ENCODE measurements at regions of chr3 and their contacts with region 1.

Region 1: GRCh38 chr3:50491023-50491422 is 12.4 kb downstream of the CACNA2D2 start:
- DNase-seq: no peak
- H3K4me3 ChIP-seq: no peak overlapping the region
- H3K27ac ChIP-seq: no peak overlapping the region
- H3K4me1 ChIP-seq: no peaks in the 10 kb centered on the region
- H3K27me3 ChIP-seq: no peaks in the 10 kb centered on the region
- CTCF ChIP-seq: no peak
- POLR2A ChIP-seq: no peak

Region 2: GRCh38 chr3:49882166-49882565 is 608.9 kb before region 1 on chr3:
- intact Hi-C with region 1: loop called (anchors 5 kb)
- DNase-seq: no peak
- H3K4me3 ChIP-seq: no peak overlapping the region
- H3K27ac ChIP-seq: no peak overlapping the region
- H3K4me1 ChIP-seq: no peaks in the 10 kb centered on the region
- H3K27me3 ChIP-seq: no peaks in the 10 kb centered on the region
- CTCF ChIP-seq: no peak
- POLR2A ChIP-seq: no peak

Region 3: GRCh38 chr3:50519471-50520089 is 28.6 kb after region 1 on chr3:
- intact Hi-C with region 1: no loop called
- DNase-seq: peak; percentile 46 to 74
- H3K4me3 ChIP-seq: no peak overlapping the region
- H3K27ac ChIP-seq: no peak overlapping the region
- H3K4me1 ChIP-seq: peaks cover 0 to 6% of the 10 kb centered on the region in 2 donors
- H3K27me3 ChIP-seq: no peaks in the 10 kb centered on the region
- CTCF ChIP-seq: peak; percentile 75 to 82 (median 75)
- POLR2A ChIP-seq: no peak

Region 4: GRCh38 chr3:51734572-51734907 is 1243.5 kb after region 1 on chr3:
- intact Hi-C with region 1: no loop called
- DNase-seq: no peak
- H3K4me3 ChIP-seq: no peak overlapping the region
- H3K27ac ChIP-seq: no peak overlapping the region
- H3K4me1 ChIP-seq: no peaks in the 10 kb centered on the region
- H3K27me3 ChIP-seq: no peaks in the 10 kb centered on the region
- CTCF ChIP-seq: no peak
- POLR2A ChIP-seq: no peak